Heart right ventricle (tissue), 16 donors: ENCODE measurements at regions of chr1 and their contacts with region 1.

Region 1: GRCh38 chr1:226195144-226195543 is 8.6 kb upstream of the ACBD3 start:
- DNase-seq: no peak
- ATAC-seq: no peak
- H3K4me3 ChIP-seq: no peak overlapping the region
- H3K27ac ChIP-seq: no peak overlapping the region
- H3K4me1 ChIP-seq: peaks cover 0 to 4% (median 0%) of the 10 kb centered on the region in 9 donors
- H3K27me3 ChIP-seq: peaks cover 0 to 8% (median 0%) of the 10 kb centered on the region in 7 donors
- CTCF ChIP-seq: no peak

Region 2: DNA sequence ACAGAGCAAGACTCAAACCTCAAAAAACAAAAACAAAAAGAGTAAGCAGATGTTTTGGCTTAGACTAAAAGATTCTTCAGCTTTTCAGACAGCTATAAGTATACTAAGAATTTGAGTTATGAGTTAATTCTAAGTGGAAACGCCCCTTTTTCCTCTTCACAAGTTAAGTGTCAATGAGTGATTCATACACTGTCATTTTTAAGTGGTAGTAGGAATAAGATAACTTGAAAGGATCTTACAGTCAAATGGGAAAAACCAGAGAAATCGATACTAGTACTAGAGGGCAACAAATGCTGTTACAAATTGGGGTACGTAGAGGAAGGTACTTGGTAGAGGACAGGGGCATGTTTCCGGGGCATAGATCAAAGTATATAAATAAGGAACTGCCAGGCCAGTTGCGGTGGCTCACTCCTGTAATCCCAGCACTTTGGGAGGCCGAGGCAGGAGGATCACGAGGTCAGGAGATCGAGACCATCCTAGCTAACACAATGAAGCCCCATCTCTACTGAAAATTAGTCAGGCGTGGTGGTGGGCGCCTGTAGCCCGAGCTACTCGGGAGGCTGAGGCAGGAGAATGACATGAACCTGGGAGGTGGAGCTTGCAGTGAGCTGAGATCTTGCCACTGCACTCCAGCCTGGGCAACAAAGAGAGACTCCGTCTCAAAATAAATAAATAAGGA is 125.2 kb before region 1 on chr1:
- intact Hi-C with region 1: loop called in 2 of 10 experiments (anchors 5 to 10 kb)
- DNase-seq: no peak
- ATAC-seq: no peak
- H3K4me3 ChIP-seq: no peak overlapping the region
- H3K27ac ChIP-seq: no peak overlapping the region
- H3K4me1 ChIP-seq: peaks cover 5 to 66% (median 50%) of the 10 kb centered on the region in 9 donors
- H3K27me3 ChIP-seq: no peaks in the 10 kb centered on the region
- CTCF ChIP-seq: no peak

Region 3: GRCh38 chr1:226702957-226703831 is 508.1 kb after region 1 on chr1:
- intact Hi-C with region 1: no loop called
- DNase-seq: peak; percentile 78 to 82
- ATAC-seq: peak; percentile 85 to 92 (median 90)
- H3K4me3 ChIP-seq: peak overlapping the region; percentile 33 to 81 (median 70)
- H3K27ac ChIP-seq: peak overlapping the region; percentile 94 to 99 (median 96)
- H3K4me1 ChIP-seq: peaks cover 0 to 88% (median 48%) of the 10 kb centered on the region in 9 donors
- H3K27me3 ChIP-seq: no peaks in the 10 kb centered on the region
- CTCF ChIP-seq: no peak